Activated naive CD4-positive, alpha-beta T cell treated with anti-CD3 and anti-CD28 coated beads for 36 hours (primary cell): ENCODE measurements at regions of chr1 and their contacts with region 1.

Region 1: GRCh38 chr1:25447547-25447946 is 16.9 kb downstream of the MACO1 start:
- DNase-seq: peak; percentile 50
- H3K4me3 Mint-ChIP-seq: no peak overlapping the region
- H3K27ac Mint-ChIP-seq: peak overlapping the region; percentile 77
- H3K4me1 Mint-ChIP-seq: peaks cover 34% of the 10 kb centered on the region
- H3K27me3 Mint-ChIP-seq: no peaks in the 10 kb centered on the region

Region 2: DNA sequence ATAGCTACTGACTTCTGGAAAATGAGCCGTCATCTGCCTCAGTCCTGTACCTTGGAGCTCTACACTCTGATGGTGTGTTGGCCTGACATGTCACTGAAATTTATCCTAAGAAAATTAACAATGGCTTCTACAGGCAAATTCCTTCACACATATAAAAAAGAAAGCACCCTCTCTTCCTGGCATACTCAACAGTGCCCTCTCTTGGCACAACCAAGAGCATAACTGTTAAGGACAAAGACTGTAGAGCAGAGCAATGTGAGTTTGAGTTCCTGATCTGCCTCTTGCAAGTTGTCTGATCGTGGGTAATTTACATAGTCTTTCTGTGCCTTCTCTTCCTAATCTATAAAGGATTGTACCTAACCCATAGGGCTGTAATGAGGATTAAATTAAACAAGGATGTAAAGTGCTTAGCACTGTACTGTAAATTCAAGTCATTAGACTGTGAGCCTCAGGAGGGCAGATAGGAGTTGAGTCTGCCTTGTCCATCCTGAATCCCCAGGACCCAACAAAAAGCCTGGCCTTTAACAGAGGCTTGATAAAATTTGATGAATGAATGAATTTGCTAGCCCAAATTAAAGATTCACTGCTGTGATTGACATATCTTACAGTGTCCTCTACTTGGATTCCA is 298.8 kb before region 1 on chr1:
- CTCF ChIA-PET with region 1: no interaction called
- intact Hi-C with region 1: no loop called
- DNase-seq: peak; percentile 60
- H3K4me3 Mint-ChIP-seq: no peak overlapping the region
- H3K27ac Mint-ChIP-seq: no peak overlapping the region
- H3K4me1 Mint-ChIP-seq: no peaks in the 10 kb centered on the region
- H3K27me3 Mint-ChIP-seq: peaks cover 3% of the 10 kb centered on the region

Region 3: GRCh38 chr1:25198663-25199252 is 248.8 kb before region 1 on chr1:
- CTCF ChIA-PET with region 1: no interaction called
- intact Hi-C with region 1: no loop called
- DNase-seq: no peak
- H3K4me3 Mint-ChIP-seq: no peak overlapping the region
- H3K27ac Mint-ChIP-seq: no peak overlapping the region
- H3K4me1 Mint-ChIP-seq: peaks cover 10% of the 10 kb centered on the region
- H3K27me3 Mint-ChIP-seq: no peaks in the 10 kb centered on the region

Region 4: GRCh38 chr1:25476186-25477097 is 28.9 kb after region 1 on chr1:
- CTCF ChIA-PET with region 1: no interaction called
- intact Hi-C with region 1: loop called (anchors 2 kb)
- DNase-seq: no peak
- H3K4me3 Mint-ChIP-seq: no peak overlapping the region
- H3K27ac Mint-ChIP-seq: peak overlapping the region; percentile 54
- H3K4me1 Mint-ChIP-seq: peaks cover 57% of the 10 kb centered on the region
- H3K27me3 Mint-ChIP-seq: no peaks in the 10 kb centered on the region

Region 5: GRCh38 chr1:25990702-25991395 is 543.3 kb after region 1 on chr1:
- CTCF ChIA-PET with region 1: no interaction called
- intact Hi-C with region 1: no loop called
- DNase-seq: peak; percentile 75
- H3K4me3 Mint-ChIP-seq: peak overlapping the region; percentile 73
- H3K27ac Mint-ChIP-seq: peak overlapping the region; percentile 82
- H3K4me1 Mint-ChIP-seq: peaks cover 51% of the 10 kb centered on the region
- H3K27me3 Mint-ChIP-seq: no peaks in the 10 kb centered on the region